ENCODE measurements at regions of chr2 and their contacts with region 1.

Region 1: DNA sequence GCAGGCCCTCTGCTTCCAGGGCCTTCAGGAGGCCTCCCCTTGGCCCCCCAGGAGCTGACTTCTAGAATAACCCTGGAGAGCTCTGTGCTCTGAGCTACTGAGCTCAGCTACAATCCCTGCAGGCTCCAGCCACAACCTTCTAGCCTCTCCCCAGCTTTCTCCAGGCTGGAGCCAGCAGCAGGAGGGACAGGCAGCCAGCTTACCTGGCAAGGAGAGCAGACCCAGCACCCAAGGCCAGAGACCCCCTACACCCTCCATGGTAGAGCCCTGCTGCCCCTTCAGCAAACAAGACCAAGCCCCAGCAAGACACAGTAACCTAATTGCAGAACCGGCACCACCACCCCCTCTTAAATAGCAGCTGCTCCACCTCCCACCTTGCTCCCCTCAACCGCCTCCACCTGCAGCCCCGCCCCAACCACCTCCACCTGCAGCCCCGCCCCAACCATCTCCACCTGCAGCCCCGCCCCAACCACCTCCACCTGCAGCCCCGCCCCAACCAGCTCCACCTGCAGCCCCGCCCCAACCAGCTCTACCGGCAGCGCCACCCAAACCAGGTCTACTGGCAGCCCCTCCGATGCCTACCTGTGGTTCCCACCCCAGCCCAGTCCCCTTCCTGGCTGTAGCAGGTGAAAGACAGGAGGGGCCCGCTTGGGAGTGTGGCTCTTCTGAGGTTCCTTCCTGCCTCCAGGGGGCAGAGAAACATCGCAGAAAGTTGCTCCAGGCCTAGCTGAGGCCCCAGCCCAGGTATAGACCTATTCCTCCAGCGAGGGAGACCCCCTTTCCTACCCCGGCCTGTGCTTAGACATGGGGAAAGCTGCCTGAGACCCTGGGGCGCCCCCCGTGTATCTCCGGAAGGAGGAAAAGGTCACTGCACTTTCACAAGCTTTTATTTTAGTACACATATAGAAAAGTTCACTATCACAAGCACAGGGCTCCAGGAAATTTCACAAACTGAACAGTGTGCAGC is at the start of gene ASTL:
- DNase-seq: peak; percentile 78
- ATAC-seq: peak; percentile 38
- H3K4me3 Mint-ChIP-seq: no peak within 1 kb of the TSS
- H3K27ac Mint-ChIP-seq: no peak within 1 kb of the TSS
- H3K4me1 Mint-ChIP-seq: peaks cover 18% of the 10 kb centered on the region
- H3K27me3 Mint-ChIP-seq: no peaks in the 10 kb centered on the region
- total RNA-seq, gene ASTL: 1.9 to 6.4 TPM

Region 2: DNA sequence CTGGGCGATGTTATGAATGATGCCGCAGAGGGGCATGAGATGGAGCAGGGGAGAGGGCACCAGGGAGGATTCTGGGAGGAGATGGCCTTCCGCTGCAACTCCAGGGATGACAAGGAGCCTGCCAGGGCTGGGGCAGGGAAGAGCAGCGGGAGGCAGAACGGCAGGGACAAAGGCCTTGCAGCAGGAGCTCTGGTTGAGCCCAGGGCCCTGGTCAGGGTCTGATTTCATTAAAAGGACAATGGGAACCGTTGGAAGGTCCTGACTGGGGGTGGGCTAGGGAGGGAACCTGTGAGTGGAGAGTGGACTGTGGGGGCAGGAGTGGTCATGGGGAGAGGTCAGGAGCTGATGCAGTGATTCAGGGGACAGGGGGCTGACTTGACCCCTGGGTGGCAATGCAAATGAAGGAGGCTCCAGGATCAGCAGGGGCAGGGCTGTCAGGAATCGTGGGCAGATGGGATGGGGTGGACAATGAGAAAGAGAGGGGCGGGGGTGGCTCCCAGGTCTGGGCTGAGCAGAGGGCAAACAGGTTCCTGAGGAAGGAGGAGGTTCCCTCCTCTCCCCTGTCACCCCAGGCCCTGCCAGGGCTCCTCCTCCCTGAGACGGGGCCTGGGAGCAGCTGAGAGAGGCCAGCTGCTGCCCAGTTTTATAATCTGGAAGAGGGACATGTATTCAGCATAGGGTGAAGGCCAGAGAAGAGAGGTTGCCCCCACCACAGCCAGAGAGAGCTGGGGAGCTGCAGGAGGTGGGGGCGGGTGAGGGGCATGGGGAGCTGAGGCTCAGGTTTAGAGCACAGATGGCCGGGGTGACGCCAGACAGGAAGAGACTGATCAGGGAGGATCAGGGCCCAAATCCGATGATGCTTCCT is 14.1 kb after region 1 on chr2:
- CTCF ChIA-PET with region 1: interaction called, 675 read pairs
- DNase-seq: no peak
- ATAC-seq: no peak
- H3K4me3 Mint-ChIP-seq: no peak overlapping the region
- H3K27ac Mint-ChIP-seq: no peak overlapping the region
- H3K4me1 Mint-ChIP-seq: peaks cover 57% of the 10 kb centered on the region
- H3K27me3 Mint-ChIP-seq: no peaks in the 10 kb centered on the region

Region 3: DNA sequence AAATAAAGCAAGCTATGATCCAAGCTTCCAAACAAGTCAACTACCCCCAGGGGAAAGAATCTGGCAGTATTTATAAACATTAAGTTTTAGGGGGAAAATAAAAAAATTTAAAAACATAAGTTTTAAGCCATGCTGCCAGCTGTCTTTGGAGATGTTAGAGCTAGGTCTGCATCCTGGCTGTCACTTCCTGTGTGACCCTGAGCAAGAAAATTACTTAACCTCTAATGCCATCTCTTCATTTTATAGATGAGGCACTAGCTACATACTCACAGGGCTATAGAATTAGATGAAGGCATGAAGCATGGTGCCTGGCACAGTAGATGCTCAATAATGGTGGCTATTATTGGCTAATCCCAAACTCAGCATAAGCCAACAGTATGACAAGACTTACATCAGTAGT is 42.1 kb after region 1 on chr2:
- CTCF ChIA-PET with region 1: interaction called, 675 read pairs
- DNase-seq: no peak
- ATAC-seq: peak; percentile 47
- H3K4me3 Mint-ChIP-seq: no peak overlapping the region
- H3K27ac Mint-ChIP-seq: no peak overlapping the region
- H3K4me1 Mint-ChIP-seq: peaks cover 15% of the 10 kb centered on the region
- H3K27me3 Mint-ChIP-seq: no peaks in the 10 kb centered on the region

Region 4: GRCh38 chr2:96208143-96209010 is 69.9 kb after region 1 on chr2 and contains the start of gene STARD7:
- CTCF ChIA-PET with region 1: interaction called, 11 read pairs
- DNase-seq: peak; percentile 98
- ATAC-seq: peak; percentile 92
- H3K4me3 Mint-ChIP-seq: peak within 1 kb of the TSS; percentile 88
- H3K27ac Mint-ChIP-seq: peak within 1 kb of the TSS; percentile 88
- H3K4me1 Mint-ChIP-seq: peaks cover 49% of the 10 kb centered on the region
- H3K27me3 Mint-ChIP-seq: no peaks in the 10 kb centered on the region
- total RNA-seq, gene STARD7: 131 to 180 TPM

Region 5: DNA sequence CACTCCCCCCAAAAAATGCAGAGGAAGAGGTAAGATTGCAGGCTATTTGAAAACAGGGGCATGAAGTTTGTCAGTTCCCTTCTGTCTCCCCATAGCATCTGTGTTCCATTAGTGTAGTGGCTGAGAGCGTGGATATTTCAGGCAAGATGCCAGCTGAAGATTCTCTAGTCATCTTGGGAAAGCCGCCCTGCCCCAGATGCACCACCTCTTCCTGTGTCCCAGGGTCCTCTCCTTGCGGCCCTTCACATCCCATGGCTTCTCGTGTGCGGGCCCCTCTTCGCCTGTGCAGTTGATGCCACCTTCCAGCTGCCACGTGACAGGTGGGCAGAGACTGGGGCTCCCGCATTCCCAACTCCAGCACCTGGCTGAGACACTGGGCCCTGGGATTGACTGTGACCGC is 111.2 kb after region 1 on chr2:
- CTCF ChIA-PET with region 1: no interaction called
- DNase-seq: no peak
- ATAC-seq: no peak
- H3K4me3 Mint-ChIP-seq: no peak overlapping the region
- H3K27ac Mint-ChIP-seq: peak overlapping the region; percentile 17
- H3K4me1 Mint-ChIP-seq: peaks cover 47% of the 10 kb centered on the region
- H3K27me3 Mint-ChIP-seq: no peaks in the 10 kb centered on the region

Region 6: GRCh38 chr2:96260404-96261260 is 122.2 kb after region 1 on chr2:
- CTCF ChIA-PET with region 1: interaction called, 15 read pairs
- DNase-seq: peak; percentile 54
- ATAC-seq: no peak
- H3K4me3 Mint-ChIP-seq: no peak overlapping the region
- H3K27ac Mint-ChIP-seq: peak overlapping the region; percentile 67
- H3K4me1 Mint-ChIP-seq: peaks cover 51% of the 10 kb centered on the region
- H3K27me3 Mint-ChIP-seq: no peaks in the 10 kb centered on the region

Region 7: GRCh38 chr2:96265840-96266679 is 127.6 kb after region 1 on chr2 and contains the starts of genes CIAO1 and TMEM127:
- CTCF ChIA-PET with region 1: interaction called, 19 read pairs
- DNase-seq: peak; percentile 100
- ATAC-seq: peak; percentile 92
- H3K4me3 Mint-ChIP-seq: peak within 1 kb of the TSS; percentile 96
- H3K27ac Mint-ChIP-seq: peak within 1 kb of the TSS; percentile 87
- H3K4me1 Mint-ChIP-seq: peaks cover 39% of the 10 kb centered on the region
- H3K27me3 Mint-ChIP-seq: no peaks in the 10 kb centered on the region
- total RNA-seq, gene CIAO1: 67.0 to 76.8 TPM
- total RNA-seq, gene TMEM127: 32.7 to 36.9 TPM